Activated CD8-positive, alpha-beta T cell treated with anti-CD3 and anti-CD28 coated beads, Interleukin-2, amount 10 ng/mL, durations not matched to agents 7 days and 5 days (primary cell): ENCODE measurements at regions of chr14 and their contacts with region 1.

Region 1: DNA sequence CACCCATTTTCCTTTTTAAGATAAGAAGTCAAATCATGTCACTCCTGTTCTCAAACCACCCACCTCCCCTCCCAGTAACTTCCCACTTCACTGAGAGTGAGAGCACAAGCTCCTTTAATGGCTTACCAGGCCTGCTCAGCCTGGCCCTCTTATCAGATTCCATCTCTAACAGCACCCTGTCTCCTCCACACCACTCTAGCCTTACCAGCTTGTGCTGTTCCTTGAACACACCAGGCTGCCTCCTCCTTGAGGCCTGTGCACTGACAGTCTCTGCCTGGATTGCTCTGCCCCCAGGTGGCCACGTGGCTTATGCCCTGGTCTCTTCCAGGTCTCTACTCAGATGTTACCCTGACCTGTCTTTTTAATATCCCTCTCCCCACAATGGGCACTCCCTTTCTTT is 40.1 kb upstream of the EVL start:
- DNase-seq: peak; percentile 59
- ATAC-seq: peak; percentile 89
- H3K4me3 Mint-ChIP-seq: no peak overlapping the region
- H3K27ac Mint-ChIP-seq: no peak overlapping the region
- H3K4me1 Mint-ChIP-seq: peaks cover 10% of the 10 kb centered on the region
- H3K27me3 Mint-ChIP-seq: peaks cover 2% of the 10 kb centered on the region

Region 2: DNA sequence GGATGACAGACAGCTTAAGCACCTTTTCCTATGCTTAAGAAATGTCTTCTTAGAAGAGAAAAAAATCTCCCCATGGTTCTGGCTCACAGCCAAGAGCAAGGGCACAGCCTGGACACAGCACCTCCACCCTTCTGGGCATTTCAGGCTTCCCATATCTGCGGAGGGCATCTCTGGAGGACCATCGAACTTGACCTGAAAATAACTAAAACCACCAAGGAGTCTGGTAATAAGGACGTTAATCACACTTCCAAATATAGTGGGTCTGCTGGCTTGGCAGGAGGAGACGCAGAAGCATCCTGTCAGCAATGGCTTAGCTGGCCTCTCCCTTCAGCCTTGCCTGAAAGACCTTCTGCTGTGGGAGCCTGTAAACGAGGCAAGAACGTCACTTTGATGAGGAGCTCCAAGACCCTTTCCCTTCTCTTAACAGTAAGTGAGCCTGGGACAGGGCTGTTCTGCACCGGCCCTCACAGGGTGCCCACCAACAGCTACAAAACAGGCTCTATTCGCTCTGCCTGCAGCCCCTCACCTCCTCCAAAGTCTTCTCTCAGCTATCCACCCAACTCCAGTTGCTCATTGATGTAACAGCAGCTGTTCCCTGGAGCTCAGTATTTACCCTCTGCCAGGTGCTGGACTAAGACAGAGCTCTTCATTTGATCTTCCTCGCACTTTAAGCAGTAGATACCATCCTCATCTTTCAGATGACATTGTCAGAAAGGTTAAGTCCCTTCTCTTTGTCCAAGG is 557.6 kb before region 1 on chr14:
- CTCF ChIA-PET with region 1: no interaction called
- POLR2A ChIA-PET with region 1: no interaction called
- DNase-seq: no peak
- ATAC-seq: no peak
- H3K4me3 Mint-ChIP-seq: no peak overlapping the region
- H3K27ac Mint-ChIP-seq: peak overlapping the region; percentile 55
- H3K4me1 Mint-ChIP-seq: peaks cover 17% of the 10 kb centered on the region
- H3K27me3 Mint-ChIP-seq: no peaks in the 10 kb centered on the region

Region 3: DNA sequence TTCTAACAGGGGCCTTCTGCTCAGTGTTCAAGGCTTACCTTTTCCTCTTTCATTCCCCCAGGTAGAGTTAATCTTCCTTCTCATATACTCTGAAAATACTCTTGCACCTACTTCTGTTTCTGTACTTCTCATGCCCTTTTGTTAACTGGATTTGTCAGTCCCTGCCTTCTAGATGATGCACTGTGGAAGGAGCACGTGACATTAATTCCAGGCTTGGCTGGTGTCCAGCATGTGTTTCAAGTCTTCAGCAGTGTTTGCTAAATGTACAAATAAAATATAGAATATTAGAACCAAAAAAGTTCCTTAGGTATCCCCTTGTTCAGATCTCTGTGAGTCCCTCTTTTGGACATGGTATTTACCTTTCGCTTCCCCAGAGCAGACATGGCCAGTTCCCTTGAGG is 12.2 kb after region 1 on chr14:
- CTCF ChIA-PET with region 1: interaction called, 12 read pairs
- POLR2A ChIA-PET with region 1: interaction called, 3 read pairs
- DNase-seq: no peak
- ATAC-seq: no peak
- H3K4me3 Mint-ChIP-seq: no peak overlapping the region
- H3K27ac Mint-ChIP-seq: no peak overlapping the region
- H3K4me1 Mint-ChIP-seq: peaks cover 10% of the 10 kb centered on the region
- H3K27me3 Mint-ChIP-seq: no peaks in the 10 kb centered on the region